H1 (cell line): ENCODE measurements at regions of chr14 and their contacts with region 1.

Region 1: DNA sequence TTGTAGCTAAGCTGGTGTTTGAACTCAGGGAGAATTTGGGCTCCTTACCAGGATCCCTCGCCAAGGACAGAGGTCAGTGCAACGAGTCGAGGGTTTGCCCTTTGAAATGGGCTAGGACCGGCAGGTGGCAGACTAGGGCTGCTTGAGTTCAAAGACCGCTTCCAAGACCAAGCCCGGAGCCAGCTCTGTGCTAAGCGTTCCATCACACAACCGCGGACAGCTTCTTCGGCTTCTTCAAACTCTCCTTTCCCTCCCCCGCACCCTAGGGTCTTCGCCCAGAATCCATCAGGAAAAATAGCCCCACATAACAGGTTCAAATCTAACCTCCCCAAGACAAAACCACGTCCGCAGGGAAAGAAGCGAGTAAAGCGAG is 705 bp upstream of the FLVCR2 start:
- DNase-seq: peak; percentile 79 to 85
- H3K4me3 ChIP-seq: peak overlapping the region; percentile 46 to 83 (median 72)
- H3K27ac ChIP-seq: no peak overlapping the region
- H3K4me1 ChIP-seq: peaks cover 0 to 13% (median 4%) of the 10 kb centered on the region in 4 experiments; a peak in 4 of 7 replicates
- H3K27me3 ChIP-seq: peaks cover 0 to 8% (median 5%) of the 10 kb centered on the region in 4 experiments; a peak in 6 of 7 replicates
- CTCF ChIP-seq: peak; percentile 75 to 91 (median 90)
- EP300 ChIP-seq: no peak
- POLR2A ChIP-seq: no peak
- RAD21 ChIP-seq: peak; percentile 88 to 92

Region 2: DNA sequence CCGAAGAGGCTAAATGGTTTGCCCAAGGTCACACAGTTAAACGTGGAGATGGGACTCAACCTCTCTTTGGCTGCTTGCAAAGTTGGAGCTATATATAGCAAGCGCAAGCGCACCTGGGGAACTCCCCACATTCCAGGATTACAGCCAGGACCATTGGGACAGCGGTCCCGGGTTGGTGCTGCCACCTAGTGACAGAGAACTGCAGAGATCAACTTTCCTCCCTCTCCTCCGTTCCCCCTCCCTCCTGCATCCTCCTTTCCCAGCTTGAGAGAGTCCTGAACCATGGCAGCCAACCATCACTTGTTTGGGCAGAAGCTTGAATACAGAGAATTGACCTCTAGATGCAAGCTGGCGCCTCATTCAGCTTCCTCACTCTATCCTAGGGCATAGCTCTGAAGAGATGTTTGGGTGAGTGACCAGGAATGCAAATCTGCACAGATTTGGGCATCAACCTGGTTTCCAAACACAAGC is 16.7 kb before region 1 on chr14:
- CTCF ChIA-PET with region 1: interaction called, 17 read pairs
- POLR2A ChIA-PET with region 1: no interaction called
- DNase-seq: peak; percentile 79 to 88
- H3K4me3 ChIP-seq: no peak overlapping the region
- H3K27ac ChIP-seq: no peak overlapping the region
- H3K4me1 ChIP-seq: peaks cover 0 to 4% (median 2%) of the 10 kb centered on the region in 4 experiments; a peak in 3 of 7 replicates
- H3K27me3 ChIP-seq: no peaks in the 10 kb centered on the region
- CTCF ChIP-seq: peak; percentile 87 to 97 (median 90)
- EP300 ChIP-seq: peak in 1 of 2 experiments; percentile 67; a peak in 1 of 3 replicates
- POLR2A ChIP-seq: no peak
- RAD21 ChIP-seq: peak; percentile 90 to 93

Region 3: GRCh38 chr14:75604856-75605851 is 27.4 kb after region 1 on chr14:
- CTCF ChIA-PET with region 1: interaction called, 19 read pairs
- POLR2A ChIA-PET with region 1: no interaction called
- DNase-seq: no peak
- H3K4me3 ChIP-seq: no peak overlapping the region
- H3K27ac ChIP-seq: no peak overlapping the region
- H3K4me1 ChIP-seq: no peaks in the 10 kb centered on the region
- H3K27me3 ChIP-seq: no peaks in the 10 kb centered on the region
- CTCF ChIP-seq: no peak
- EP300 ChIP-seq: no peak
- POLR2A ChIP-seq: no peak
- RAD21 ChIP-seq: no peak

Region 4: GRCh38 chr14:75642056-75642455 is 64.3 kb after region 1 on chr14:
- CTCF ChIA-PET with region 1: interaction called, 29 read pairs
- POLR2A ChIA-PET with region 1: interaction called, 6 read pairs
- DNase-seq: no peak
- H3K4me3 ChIP-seq: no peak overlapping the region
- H3K27ac ChIP-seq: no peak overlapping the region
- H3K4me1 ChIP-seq: no peaks in the 10 kb centered on the region
- H3K27me3 ChIP-seq: no peaks in the 10 kb centered on the region
- CTCF ChIP-seq: no peak
- EP300 ChIP-seq: no peak
- POLR2A ChIP-seq: no peak
- RAD21 ChIP-seq: no peak

Region 5: GRCh38 chr14:75660630-75661494 is 83.1 kb after region 1 on chr14 and contains the starts of genes ERG28 and TTLL5:
- CTCF ChIA-PET with region 1: interaction called, 348 read pairs
- POLR2A ChIA-PET with region 1: interaction called, 22 read pairs
- DNase-seq: peak; percentile 95 to 98
- H3K4me3 ChIP-seq: peak within 1 kb of the TSS; percentile 67 to 88 (median 83)
- H3K27ac ChIP-seq: peak within 1 kb of the TSS; percentile 67
- H3K4me1 ChIP-seq: peaks cover 0 to 2% (median 0%) of the 10 kb centered on the region in 4 experiments; a peak in 2 of 7 replicates
- H3K27me3 ChIP-seq: no peaks in the 10 kb centered on the region
- CTCF ChIP-seq: no peak
- EP300 ChIP-seq: no peak; a peak in 1 of 3 replicates
- POLR2A ChIP-seq: peak; percentile 25 to 45; a peak in 2 of 3 replicates
- RAD21 ChIP-seq: no peak
- total RNA-seq, gene ERG28: 30.5 and 32.6 TPM in 2 replicates
- total RNA-seq, gene TTLL5: 44.6 and 45.9 TPM in 2 replicates

Region 6: GRCh38 chr14:75757644-75758402 is 180.1 kb after region 1 on chr14:
- CTCF ChIA-PET with region 1: no interaction called
- POLR2A ChIA-PET with region 1: no interaction called
- DNase-seq: no peak
- H3K4me3 ChIP-seq: no peak overlapping the region
- H3K27ac ChIP-seq: no peak overlapping the region
- H3K4me1 ChIP-seq: no peaks in the 10 kb centered on the region; a peak in 2 of 7 replicates
- H3K27me3 ChIP-seq: no peaks in the 10 kb centered on the region
- CTCF ChIP-seq: no peak
- EP300 ChIP-seq: no peak
- POLR2A ChIP-seq: no peak
- RAD21 ChIP-seq: no peak